ENCODE measurements at regions of chr16 and their contacts with region 1.

Region 1: GRCh38 chr16:30844671-30845449 is 49.0 kb downstream of the BCL7C start:
- DNase-seq: peak in 1 of 2 donors; percentile 76
- ATAC-seq: peak; percentile 91
- H3K4me3 ChIP-seq: no peak overlapping the region
- H3K27ac ChIP-seq: peak overlapping the region in 1 of 2 donors; percentile 66
- H3K4me1 ChIP-seq: peaks cover 0 to 2% of the 10 kb centered on the region in 2 donors
- H3K27me3 ChIP-seq: no peaks in the 10 kb centered on the region

Region 2: GRCh38 chr16:29805378-29806098 is 1039.3 kb before region 1 on chr16:
- intact Hi-C with region 1: no loop called
- DNase-seq: peak; percentile 99
- ATAC-seq: peak; percentile 95
- H3K4me3 ChIP-seq: peak overlapping the region; percentile 20 to 38
- H3K27ac ChIP-seq: peak overlapping the region; percentile 23 to 80
- H3K4me1 ChIP-seq: no peaks in the 10 kb centered on the region
- H3K27me3 ChIP-seq: no peaks in the 10 kb centered on the region

Region 3: DNA sequence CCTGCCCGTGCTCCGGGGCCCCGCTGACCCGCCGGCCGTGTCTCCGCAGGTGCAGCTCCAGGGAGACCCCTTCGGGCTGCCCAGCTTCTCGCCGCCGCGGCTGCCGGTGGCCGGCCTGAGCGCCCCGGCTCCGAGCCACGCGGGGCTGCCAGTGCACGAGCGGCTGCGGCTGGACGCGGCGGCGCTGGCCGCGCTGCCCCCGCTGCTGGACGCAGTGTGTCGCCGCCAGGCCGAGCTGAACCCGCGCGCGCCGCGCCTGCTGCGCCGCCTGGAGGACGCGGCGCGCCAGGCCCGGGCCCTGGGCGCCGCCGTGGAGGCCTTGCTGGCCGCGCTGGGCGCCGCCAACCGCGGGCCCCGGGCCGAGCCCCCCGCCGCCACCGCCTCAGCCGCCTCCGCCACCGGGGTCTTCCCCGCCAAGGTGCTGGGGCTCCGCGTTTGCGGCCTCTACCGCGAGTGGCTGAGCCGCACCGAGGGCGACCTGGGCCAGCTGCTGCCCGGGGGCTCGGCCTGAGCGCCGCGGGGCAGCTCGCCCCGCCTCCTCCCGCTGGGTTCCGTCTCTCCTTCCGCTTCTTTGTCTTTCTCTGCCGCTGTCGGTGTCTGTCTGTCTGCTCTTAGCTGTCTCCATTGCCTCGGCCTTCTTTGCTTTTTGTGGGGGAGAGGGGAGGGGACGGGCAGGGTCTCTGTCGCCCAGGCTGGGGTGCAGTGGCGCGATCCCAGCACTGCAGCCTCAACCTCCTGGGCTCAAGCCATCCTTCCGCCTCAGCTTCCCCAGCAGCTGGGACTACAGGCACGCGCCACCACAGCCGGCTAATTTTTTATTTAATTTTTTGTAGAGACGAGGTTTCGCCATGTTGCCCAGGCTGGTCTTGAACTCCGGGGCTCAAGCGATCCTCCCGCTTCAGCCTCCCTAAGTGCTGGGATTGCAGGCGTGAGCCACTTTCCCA is 57.4 kb after region 1 on chr16:
- intact Hi-C with region 1: loop called (anchors 1 to 5 kb)
- DNase-seq: peak; percentile 79 to 91
- ATAC-seq: peak; percentile 82
- H3K4me3 ChIP-seq: peak overlapping the region; percentile 50 to 80
- H3K27ac ChIP-seq: peak overlapping the region; percentile 77 to 78
- H3K4me1 ChIP-seq: no peaks in the 10 kb centered on the region
- H3K27me3 ChIP-seq: no peaks in the 10 kb centered on the region

Region 4: GRCh38 chr16:30922960-30923535 is 78.2 kb after region 1 on chr16:
- intact Hi-C with region 1: loop called (anchors 1 to 2 kb)
- DNase-seq: peak; percentile 100
- ATAC-seq: peak; percentile 93
- H3K4me3 ChIP-seq: peak overlapping the region; percentile 49 to 90
- H3K27ac ChIP-seq: peak overlapping the region in 1 of 2 donors; percentile 93
- H3K4me1 ChIP-seq: peaks cover 0 to 1% of the 10 kb centered on the region in 2 donors
- H3K27me3 ChIP-seq: no peaks in the 10 kb centered on the region

Measured in aorta (tissue), 5 donors.